ENCODE measurements at regions of chr20 and their contacts with region 1.

Region 1: DNA sequence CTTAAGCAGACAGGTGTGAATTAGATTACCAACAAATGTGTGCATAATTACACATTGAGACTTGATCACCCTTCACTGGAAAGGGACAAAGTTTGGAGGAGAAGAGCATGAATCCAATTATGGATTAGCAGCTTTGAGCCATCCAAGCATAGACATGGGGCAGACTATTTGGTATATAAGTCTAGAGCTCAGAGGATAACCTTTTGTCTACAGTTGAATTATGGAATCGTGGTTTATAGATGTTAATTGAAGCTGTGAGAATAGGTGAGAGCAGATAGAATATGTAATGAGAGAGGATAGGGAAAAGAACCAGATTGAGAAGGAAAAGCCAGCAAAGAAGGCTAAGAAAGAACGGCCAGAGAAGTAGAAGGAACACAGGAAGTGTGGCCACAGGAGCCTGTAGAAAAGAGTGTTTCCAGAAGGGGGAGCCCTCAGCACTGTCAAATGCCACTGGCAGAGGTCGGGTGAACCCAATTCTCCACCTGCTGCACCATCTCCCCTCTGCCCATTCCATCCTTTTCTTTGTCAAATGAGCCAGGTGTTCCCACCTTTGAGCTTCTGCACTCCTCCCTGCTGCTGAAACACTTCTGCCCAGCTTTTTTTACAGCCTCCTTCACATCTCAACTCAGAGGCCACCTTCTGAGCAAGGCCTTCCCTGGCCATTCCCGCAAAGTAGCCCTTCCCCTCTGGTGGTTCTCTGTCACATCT is 7.3 kb downstream of the DNTTIP1 start:
- DNase-seq: no peak
- H3K4me3 ChIP-seq: no peak overlapping the region
- H3K27me3 ChIP-seq: no peaks in the 10 kb centered on the region
- CTCF ChIP-seq: peak; percentile 78

Region 2: DNA sequence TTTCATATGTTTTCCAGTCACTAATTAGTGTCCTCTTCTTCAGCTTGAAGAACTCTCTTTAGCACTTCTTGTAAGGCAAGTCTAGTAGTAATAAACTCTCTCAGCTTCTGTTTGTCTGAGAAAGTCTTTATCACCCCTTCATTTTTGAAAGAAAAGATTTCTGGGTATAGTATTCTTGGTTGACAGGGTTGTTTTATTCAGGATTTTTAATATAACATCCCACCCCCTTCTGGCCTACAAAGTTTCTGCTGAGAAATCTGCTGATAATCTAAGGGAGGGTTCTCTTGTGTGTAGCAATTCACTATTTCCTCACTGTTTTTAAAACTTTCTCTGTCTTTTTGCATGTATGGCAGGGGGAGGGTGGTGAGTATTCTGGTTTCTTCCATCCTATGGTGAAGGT is 119.4 kb before region 1 on chr20:
- CTCF ChIA-PET with region 1: no interaction called
- POLR2A ChIA-PET with region 1: no interaction called
- DNase-seq: no peak
- H3K4me3 ChIP-seq: no peak overlapping the region
- H3K27me3 ChIP-seq: no peaks in the 10 kb centered on the region
- CTCF ChIP-seq: no peak

Region 3: GRCh38 chr20:45735552-45735951 is 63.5 kb before region 1 on chr20:
- CTCF ChIA-PET with region 1: no interaction called
- POLR2A ChIA-PET with region 1: no interaction called
- DNase-seq: no peak
- H3K4me3 ChIP-seq: no peak overlapping the region
- H3K27me3 ChIP-seq: no peaks in the 10 kb centered on the region
- CTCF ChIP-seq: no peak

Region 4: DNA sequence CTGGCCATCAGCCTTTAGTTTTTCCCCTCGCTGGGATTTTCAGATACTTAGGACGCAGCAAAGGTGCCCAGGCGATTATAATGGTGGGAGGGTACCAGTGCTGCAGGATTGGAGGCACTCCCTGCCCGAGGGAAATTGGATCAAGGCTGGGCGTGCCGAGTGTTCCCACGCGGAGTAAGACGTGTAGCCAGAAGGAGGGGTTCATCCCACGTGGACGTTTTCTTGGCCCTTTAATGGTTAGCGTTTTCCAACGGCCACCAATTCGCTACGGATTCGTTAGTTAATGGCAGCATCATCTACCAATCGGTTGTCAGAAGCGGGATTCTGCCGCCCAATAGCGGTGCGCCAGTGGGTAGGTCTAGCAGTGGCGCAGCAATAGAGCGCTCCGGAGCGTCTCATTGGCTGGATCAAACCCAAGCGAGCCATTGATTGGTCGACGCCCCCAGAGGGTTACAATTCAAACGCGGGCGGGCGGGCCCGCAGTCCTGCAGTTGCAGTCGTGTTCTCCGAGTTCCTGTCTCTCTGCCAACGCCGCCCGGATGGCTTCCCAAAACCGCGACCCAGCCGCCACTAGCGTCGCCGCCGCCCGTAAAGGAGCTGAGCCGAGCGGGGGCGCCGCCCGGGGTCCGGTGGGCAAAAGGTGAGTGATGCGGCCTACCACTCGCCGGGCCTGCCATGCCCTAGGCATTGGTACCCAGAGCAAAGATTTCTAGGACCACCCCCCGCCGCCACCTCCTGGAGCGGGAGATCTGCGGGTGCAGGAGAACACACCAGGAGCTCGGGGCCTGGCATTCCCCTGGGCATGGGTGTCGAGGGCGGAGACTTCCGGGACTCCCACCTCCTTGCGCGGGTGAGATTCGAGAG is 13.3 kb after region 1 on chr20 and contains the start of gene UBE2C:
- CTCF ChIA-PET with region 1: interaction called, 11 read pairs
- POLR2A ChIA-PET with region 1: no interaction called
- DNase-seq: peak; percentile 99
- H3K4me3 ChIP-seq: peak within 1 kb of the TSS; percentile 60
- H3K27me3 ChIP-seq: no peaks in the 10 kb centered on the region
- CTCF ChIP-seq: no peak
- polyA plus RNA-seq, gene UBE2C: 70.6 and 90.8 TPM in 2 replicates

Region 5: GRCh38 chr20:45817652-45818194 is 18.6 kb after region 1 on chr20:
- CTCF ChIA-PET with region 1: interaction called, 11 read pairs
- POLR2A ChIA-PET with region 1: no interaction called
- DNase-seq: peak; percentile 59
- H3K4me3 ChIP-seq: no peak overlapping the region
- H3K27me3 ChIP-seq: no peaks in the 10 kb centered on the region; the same call in 1 of the 2 replicates
- CTCF ChIP-seq: no peak

Region 6: GRCh38 chr20:45934586-45935415 is 135.7 kb after region 1 on chr20 and contains the start of gene PCIF1:
- CTCF ChIA-PET with region 1: interaction called, 11 read pairs
- POLR2A ChIA-PET with region 1: no interaction called
- DNase-seq: peak; percentile 85
- H3K4me3 ChIP-seq: peak within 1 kb of the TSS; percentile 63
- H3K27me3 ChIP-seq: no peaks in the 10 kb centered on the region
- CTCF ChIP-seq: no peak
- polyA plus RNA-seq, gene PCIF1: 12.7 and 20.9 TPM in 2 replicates

Region 7: GRCh38 chr20:45963059-45964005 is 164.2 kb after region 1 on chr20:
- CTCF ChIA-PET with region 1: interaction called, 26 read pairs
- POLR2A ChIA-PET with region 1: no interaction called
- DNase-seq: no peak
- H3K4me3 ChIP-seq: no peak overlapping the region
- H3K27me3 ChIP-seq: no peaks in the 10 kb centered on the region
- CTCF ChIP-seq: peak; percentile 36

Region 8: DNA sequence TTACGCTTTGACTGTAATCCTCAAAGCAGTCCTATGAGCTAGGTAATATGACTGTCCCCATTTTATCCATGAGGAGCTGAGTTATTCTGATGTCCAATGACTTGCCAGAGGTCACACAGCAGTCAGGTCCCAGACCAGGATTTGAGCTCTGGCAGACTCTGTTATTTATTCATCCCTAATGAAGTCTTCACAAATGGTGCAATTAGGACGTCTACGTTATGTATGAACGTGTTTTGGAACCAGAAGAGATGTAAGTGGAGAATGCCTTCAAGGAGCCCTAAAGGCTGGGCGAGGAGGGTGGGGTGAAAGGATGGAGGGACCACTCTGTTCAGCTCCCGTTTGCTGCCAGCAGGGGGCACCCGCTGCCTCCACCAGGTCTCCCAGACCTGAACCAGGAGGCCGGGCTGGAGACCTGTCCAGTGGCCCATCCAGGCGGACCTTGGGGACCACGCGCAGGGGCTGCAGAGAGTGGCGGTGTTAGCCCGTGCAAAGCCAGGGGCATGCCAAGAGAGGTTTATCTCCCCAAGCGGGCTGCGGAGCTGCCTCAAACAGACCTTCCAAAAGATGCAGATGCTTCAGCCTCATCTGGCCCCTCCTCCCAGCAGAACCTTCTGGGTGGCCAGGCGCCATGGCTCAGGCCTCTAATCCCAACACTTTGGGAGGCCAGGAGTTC is 188.2 kb after region 1 on chr20:
- CTCF ChIA-PET with region 1: no interaction called
- POLR2A ChIA-PET with region 1: no interaction called
- DNase-seq: no peak
- H3K4me3 ChIP-seq: no peak overlapping the region
- H3K27me3 ChIP-seq: peaks cover 2% of the 10 kb centered on the region
- CTCF ChIP-seq: peak; percentile 89

Region 9: GRCh38 chr20:46199198-46199597 is 400.1 kb after region 1 on chr20:
- CTCF ChIA-PET with region 1: no interaction called
- POLR2A ChIA-PET with region 1: no interaction called
- DNase-seq: no peak
- H3K4me3 ChIP-seq: no peak overlapping the region
- H3K27me3 ChIP-seq: peaks cover 8% of the 10 kb centered on the region
- CTCF ChIP-seq: no peak

Measured in BJ (cell line).